Body of pancreas (tissue), 4 donors: ENCODE measurements at regions of chr15 and their contacts with region 1.

Region 1: GRCh38 chr15:66883322-66883911 is 181.4 kb downstream of the SMAD6 start:
- DNase-seq: peak; percentile 83 to 91 (median 86)
- ATAC-seq: peak; percentile 88
- H3K4me3 ChIP-seq: no peak overlapping the region
- H3K27ac ChIP-seq: peak overlapping the region; percentile 11 to 78 (median 64)
- H3K4me1 ChIP-seq: peaks cover 28% of the 10 kb centered on the region
- H3K27me3 ChIP-seq: no peaks in the 10 kb centered on the region
- CTCF ChIP-seq: no peak
- POLR2A ChIP-seq: no peak

Region 2: GRCh38 chr15:66830358-66830757 is 53.1 kb before region 1 on chr15:
- intact Hi-C with region 1: loop called (anchors 5 kb)
- DNase-seq: no peak
- ATAC-seq: peak; percentile 45
- H3K4me3 ChIP-seq: no peak overlapping the region
- H3K27ac ChIP-seq: peak overlapping the region in 1 of 4 donors; percentile 26
- H3K4me1 ChIP-seq: no peaks in the 10 kb centered on the region
- H3K27me3 ChIP-seq: no peaks in the 10 kb centered on the region
- CTCF ChIP-seq: no peak
- POLR2A ChIP-seq: no peak